Dendritic cell treated with granulocyte-macrophage colony-stimulating factor and Interleukin-4, amounts not matched to agents 40 ng/mL and 50 ng/mL, for 4 days (primary cell): ENCODE measurements at regions of chr4 and their contacts with region 1.

Region 1: DNA sequence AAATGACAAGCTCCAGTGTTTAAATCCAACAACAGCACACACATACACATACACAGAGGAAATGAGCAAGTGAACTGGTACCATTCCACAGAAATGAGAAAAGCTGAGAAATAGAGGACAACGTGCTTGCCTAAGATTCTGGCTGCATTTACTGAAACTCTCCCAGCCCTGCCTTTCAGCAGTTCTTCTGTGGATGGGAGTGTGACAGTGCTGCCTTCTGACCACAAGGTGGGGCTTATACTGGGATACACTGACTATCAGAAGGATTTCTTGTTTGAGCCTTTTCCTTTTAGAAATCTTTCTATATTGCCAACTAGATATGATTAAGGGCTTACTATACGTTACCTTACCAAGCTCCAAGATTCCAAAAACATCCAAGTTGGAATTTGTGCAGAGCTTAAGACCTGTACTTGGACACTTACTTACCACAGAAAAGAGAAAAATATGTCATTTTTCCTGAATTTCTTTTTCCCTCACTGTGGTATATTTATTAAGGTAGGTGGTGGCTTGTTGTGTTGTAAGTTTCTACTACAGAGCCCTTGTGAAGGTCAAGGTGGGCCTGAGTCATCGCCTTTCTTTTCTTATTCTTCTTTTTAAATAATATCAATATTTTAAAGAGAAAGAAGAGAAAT is 10.7 kb upstream of the CXCL8 start:
- H3K4me3 Mint-ChIP-seq: no peak overlapping the region
- H3K27ac Mint-ChIP-seq: peak overlapping the region; percentile 45
- H3K4me1 Mint-ChIP-seq: peaks cover 67% of the 10 kb centered on the region
- H3K27me3 Mint-ChIP-seq: peaks cover 4% of the 10 kb centered on the region

Region 2: DNA sequence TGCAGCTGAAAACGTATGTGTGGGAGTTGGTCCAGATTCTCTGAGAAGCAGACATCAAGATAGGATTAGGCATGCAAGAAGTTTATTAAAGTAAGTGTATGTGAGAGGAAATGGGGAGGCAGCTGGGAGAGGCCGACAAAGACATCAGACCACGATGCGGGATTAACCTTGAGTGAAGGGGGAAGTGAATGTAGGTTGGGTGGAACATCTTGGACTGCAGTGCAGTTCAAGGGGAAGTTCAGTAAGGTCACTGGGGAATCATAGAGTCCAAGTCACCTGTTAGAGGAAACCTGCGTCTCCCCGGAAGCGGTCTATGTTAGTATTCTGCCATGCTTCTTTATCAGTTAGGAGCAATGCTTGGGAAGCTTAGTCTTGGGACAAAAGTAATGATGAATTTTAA is 32.8 kb after region 1 on chr4:
- intact Hi-C with region 1: loop called (anchors 5 kb)
- H3K4me3 Mint-ChIP-seq: no peak overlapping the region
- H3K27ac Mint-ChIP-seq: no peak overlapping the region
- H3K4me1 Mint-ChIP-seq: peaks cover 28% of the 10 kb centered on the region
- H3K27me3 Mint-ChIP-seq: peaks cover 28% of the 10 kb centered on the region

Region 3: GRCh38 chr4:73869130-73870050 is 139.7 kb after region 1 on chr4 and contains the start of gene CXCL1:
- intact Hi-C with region 1: loop called (anchors 10 kb)
- H3K4me3 Mint-ChIP-seq: peak within 1 kb of the TSS; percentile 90
- H3K27ac Mint-ChIP-seq: peak within 1 kb of the TSS; percentile 90
- H3K4me1 Mint-ChIP-seq: peaks cover 41% of the 10 kb centered on the region
- H3K27me3 Mint-ChIP-seq: peaks cover 16% of the 10 kb centered on the region